ENCODE measurements at regions of chr17 and their contacts with region 1.

Region 1: GRCh38 chr17:69523244-69523861 is 108.9 kb downstream of the MAP2K6 start:
- DNase-seq: peak; percentile 10 to 24
- H3K4me3 ChIP-seq: no peak overlapping the region
- H3K27ac ChIP-seq: no peak overlapping the region
- H3K4me1 ChIP-seq: no peaks in the 10 kb centered on the region
- H3K27me3 ChIP-seq: no peaks in the 10 kb centered on the region
- CTCF ChIP-seq: peak in 5 of 6 experiments; percentile 62 to 84 (median 67)
- POLR2A ChIP-seq: no peak

Region 2: GRCh38 chr17:69358688-69359596 is 164.4 kb before region 1 on chr17:
- intact Hi-C with region 1: loop called (anchors 10 kb)
- DNase-seq: no peak
- H3K4me3 ChIP-seq: no peak overlapping the region
- H3K27ac ChIP-seq: no peak overlapping the region
- H3K4me1 ChIP-seq: peaks cover 0 to 8% of the 10 kb centered on the region in 2 donors
- H3K27me3 ChIP-seq: no peaks in the 10 kb centered on the region
- CTCF ChIP-seq: no peak
- POLR2A ChIP-seq: no peak

Region 3: GRCh38 chr17:70552230-70552981 is 1029.1 kb after region 1 on chr17:
- intact Hi-C with region 1: loop called (anchors 5 kb)
- DNase-seq: peak in 1 of 2 donors; percentile 2
- H3K4me3 ChIP-seq: no peak overlapping the region
- H3K27ac ChIP-seq: no peak overlapping the region
- H3K4me1 ChIP-seq: no peaks in the 10 kb centered on the region
- H3K27me3 ChIP-seq: no peaks in the 10 kb centered on the region
- CTCF ChIP-seq: peak in 5 of 6 experiments; percentile 26 to 66 (median 60)
- POLR2A ChIP-seq: no peak

Measured in thyroid gland (tissue), 4 donors.